Activated CD4-positive, alpha-beta T cell treated with anti-CD3 and anti-CD28 coated beads for 36 hours (primary cell): ENCODE measurements at regions of chrX and their contacts with region 1.

Region 1: GRCh38 chrX:42544883-42545282 is 233.1 kb downstream of the PPP1R2C start:
- DNase-seq: no peak
- ATAC-seq: no peak
- H3K4me3 Mint-ChIP-seq: no peak overlapping the region
- H3K27ac Mint-ChIP-seq: no peak overlapping the region
- H3K4me1 Mint-ChIP-seq: peaks cover 5% of the 10 kb centered on the region
- H3K27me3 Mint-ChIP-seq: no peaks in the 10 kb centered on the region

Region 2: DNA sequence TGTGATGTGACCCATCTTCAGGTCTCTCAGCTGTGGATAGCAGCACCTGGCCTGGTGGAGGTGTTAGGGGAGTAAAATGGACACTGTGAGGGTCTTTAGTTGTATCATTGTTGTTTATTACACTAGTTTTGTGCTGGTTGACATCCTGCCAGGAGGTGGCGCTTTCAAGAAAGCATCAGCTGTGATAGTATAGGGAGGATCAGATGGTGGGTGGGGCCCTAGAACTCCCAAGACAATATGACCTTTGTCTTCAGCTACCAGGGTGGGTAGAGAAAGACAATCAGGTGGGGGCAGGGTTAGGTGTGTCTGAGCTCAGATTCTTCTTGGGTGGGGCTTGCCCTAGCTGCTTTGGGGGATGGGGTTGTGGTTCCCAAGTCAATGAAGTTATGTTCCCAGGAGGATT is 70.3 kb after region 1 on chrX:
- CTCF ChIA-PET with region 1: no interaction called
- POLR2A ChIA-PET with region 1: no interaction called
- intact Hi-C with region 1: loop called in 1 of 2 experiments (anchors 10 kb)
- DNase-seq: peak; percentile 24
- ATAC-seq: no peak
- H3K4me3 Mint-ChIP-seq: no peak overlapping the region
- H3K27ac Mint-ChIP-seq: no peak overlapping the region
- H3K4me1 Mint-ChIP-seq: peaks cover 7% of the 10 kb centered on the region
- H3K27me3 Mint-ChIP-seq: no peaks in the 10 kb centered on the region

Region 3: GRCh38 chrX:42930951-42931350 is 386.1 kb after region 1 on chrX:
- CTCF ChIA-PET with region 1: no interaction called
- POLR2A ChIA-PET with region 1: no interaction called
- intact Hi-C with region 1: no loop called
- DNase-seq: no peak
- ATAC-seq: no peak
- H3K4me3 Mint-ChIP-seq: no peak overlapping the region
- H3K27ac Mint-ChIP-seq: no peak overlapping the region
- H3K4me1 Mint-ChIP-seq: peaks cover 14% of the 10 kb centered on the region
- H3K27me3 Mint-ChIP-seq: no peaks in the 10 kb centered on the region